ENCODE measurements at regions of chr3 and their contacts with region 1.

Region 1: GRCh38 chr3:140766465-140766864 is 88.6 kb downstream of the TRIM42 start:
- DNase-seq: no peak
- ATAC-seq: peak; percentile 82
- H3K4me3 ChIP-seq: no peak overlapping the region
- H3K27ac ChIP-seq: no peak overlapping the region
- H3K4me1 ChIP-seq: no peaks in the 10 kb centered on the region
- H3K27me3 ChIP-seq: no peaks in the 10 kb centered on the region
- CTCF ChIP-seq: no peak
- EP300 ChIP-seq: no peak; a peak in 1 of 4 replicates
- POLR2A ChIP-seq: no peak
- RAD21 ChIP-seq: no peak

Region 2: DNA sequence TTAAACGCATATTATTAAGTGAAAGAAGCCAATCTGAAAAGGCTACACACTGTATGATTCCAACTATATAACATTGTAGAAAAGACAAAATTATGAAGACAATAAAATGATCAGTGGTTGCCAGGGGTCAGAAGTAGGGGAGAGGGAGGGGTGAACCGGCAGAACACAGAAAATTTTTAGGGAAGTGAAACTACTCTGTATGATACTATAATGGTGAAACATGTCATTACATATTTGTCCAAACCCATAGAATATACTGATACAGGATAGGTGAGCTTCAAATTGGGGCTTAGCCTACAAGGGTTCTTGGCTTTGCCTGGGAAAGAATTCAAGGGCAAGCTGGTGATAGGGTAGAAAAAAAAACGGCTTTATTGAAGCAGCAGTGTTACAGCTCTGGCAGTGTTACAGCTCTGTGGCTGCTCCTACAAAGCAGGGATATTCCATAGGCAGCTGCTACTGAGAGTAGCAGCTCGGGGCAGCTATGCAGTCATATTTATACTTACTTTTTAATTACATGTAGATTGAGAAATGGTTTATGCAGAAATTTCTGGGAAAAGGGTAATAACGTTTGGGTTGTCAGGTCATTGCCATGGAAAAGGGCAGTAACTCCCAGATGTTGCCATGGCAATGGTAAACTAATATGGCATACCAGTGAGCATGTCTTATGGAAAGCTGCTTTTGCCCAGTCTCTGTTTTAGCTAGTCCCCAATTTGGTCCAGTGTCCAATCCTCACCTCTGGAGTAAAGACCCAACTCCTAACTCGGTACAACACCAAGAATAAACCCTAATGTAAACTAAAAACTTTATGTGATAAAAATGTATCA is 50.1 kb after region 1 on chr3:
- CTCF ChIA-PET with region 1: no interaction called
- POLR2A ChIA-PET with region 1: no interaction called
- RAD21 ChIA-PET with region 1: no interaction called
- SMC1A ChIA-PET with region 1: no interaction called
- in situ Hi-C with region 1: no loop called
- intact Hi-C with region 1: loop called (anchors 5 kb)
- DNase-seq: peak; percentile 32
- ATAC-seq: peak; percentile 100
- H3K4me3 ChIP-seq: no peak overlapping the region
- H3K27ac ChIP-seq: no peak overlapping the region
- H3K4me1 ChIP-seq: no peaks in the 10 kb centered on the region
- H3K27me3 ChIP-seq: no peaks in the 10 kb centered on the region
- CTCF ChIP-seq: no peak
- EP300 ChIP-seq: peak in 1 of 2 experiments; percentile 40; a peak in 1 of 4 replicates
- POLR2A ChIP-seq: no peak
- RAD21 ChIP-seq: no peak

Region 3: DNA sequence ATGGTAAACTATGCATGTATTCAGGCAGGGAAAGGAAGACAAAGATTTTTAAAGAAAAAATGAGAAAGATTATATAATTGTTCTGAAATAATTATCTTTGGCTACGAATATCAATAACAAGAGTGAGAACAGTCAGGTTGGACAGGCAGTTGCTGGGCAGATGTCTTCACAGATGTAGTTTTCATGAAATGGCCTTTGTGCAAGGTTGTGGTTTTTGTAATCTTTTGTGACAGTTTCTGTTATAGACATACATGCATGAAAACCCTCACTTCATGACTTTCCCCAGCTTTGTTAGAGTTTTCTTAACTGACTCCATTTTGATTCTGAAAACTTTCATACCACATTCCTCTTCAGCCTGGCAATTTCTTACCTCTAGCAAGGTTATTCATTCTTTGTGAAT is 140.3 kb after region 1 on chr3:
- CTCF ChIA-PET with region 1: no interaction called
- POLR2A ChIA-PET with region 1: no interaction called
- RAD21 ChIA-PET with region 1: no interaction called
- SMC1A ChIA-PET with region 1: no interaction called
- in situ Hi-C with region 1: no loop called
- intact Hi-C with region 1: no loop called
- DNase-seq: no peak
- ATAC-seq: peak; percentile 85
- H3K4me3 ChIP-seq: no peak overlapping the region
- H3K27ac ChIP-seq: no peak overlapping the region
- H3K4me1 ChIP-seq: no peaks in the 10 kb centered on the region
- H3K27me3 ChIP-seq: no peaks in the 10 kb centered on the region
- CTCF ChIP-seq: no peak
- EP300 ChIP-seq: no peak
- POLR2A ChIP-seq: no peak
- RAD21 ChIP-seq: no peak